ENCODE measurements at regions of chr17 and their contacts with region 1.

Region 1: GRCh38 chr17:49031965-49032928 is 35.1 kb downstream of the IGF2BP1 start:
- DNase-seq: peak; percentile 84
- CTCF ChIP-seq: peak; percentile 71

Region 2: DNA sequence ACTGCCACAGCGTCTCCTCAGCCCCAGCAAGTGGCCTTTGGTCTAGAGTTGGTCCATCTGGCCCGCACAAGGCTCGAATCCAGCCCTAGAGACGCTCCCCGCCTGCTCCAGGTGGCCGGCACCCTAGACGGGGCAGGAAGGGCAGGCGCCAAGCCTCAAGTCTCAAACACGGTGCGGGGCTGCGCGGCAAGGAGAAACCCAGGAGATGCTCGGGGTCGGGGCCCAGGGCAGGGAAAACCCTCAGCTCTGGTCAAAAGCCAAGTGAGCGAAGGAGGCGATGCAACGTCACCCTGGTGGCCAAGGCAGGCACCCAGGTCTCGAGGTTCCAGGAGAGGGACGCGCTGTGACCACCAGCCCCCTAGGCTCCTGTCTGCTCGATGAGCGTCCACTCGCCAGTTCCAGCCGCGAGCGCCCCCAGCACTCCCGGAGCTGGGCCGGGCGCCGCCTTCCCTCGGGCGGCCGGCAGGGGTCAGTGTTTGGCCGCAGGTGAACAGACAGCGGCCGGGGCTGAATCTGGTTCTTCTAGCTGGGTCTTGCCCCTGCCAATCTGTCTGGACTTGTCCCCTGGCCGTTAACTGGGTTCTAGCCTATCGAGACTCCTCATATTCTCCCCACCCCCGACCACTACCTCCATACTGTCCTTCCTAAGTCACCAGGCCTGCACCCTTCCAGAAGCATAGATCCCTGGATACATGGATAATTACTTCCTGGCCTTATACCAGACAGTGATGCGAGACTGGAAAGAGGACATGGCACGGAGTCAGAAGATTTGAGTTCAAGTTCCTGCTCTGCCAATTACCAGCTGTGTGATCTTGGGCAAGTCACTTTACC is 353.9 kb before region 1 on chr17:
- CTCF ChIA-PET with region 1: interaction called, 19 read pairs
- POLR2A ChIA-PET with region 1: no interaction called
- DNase-seq: peak; percentile 89
- CTCF ChIP-seq: peak; percentile 92

Region 3: DNA sequence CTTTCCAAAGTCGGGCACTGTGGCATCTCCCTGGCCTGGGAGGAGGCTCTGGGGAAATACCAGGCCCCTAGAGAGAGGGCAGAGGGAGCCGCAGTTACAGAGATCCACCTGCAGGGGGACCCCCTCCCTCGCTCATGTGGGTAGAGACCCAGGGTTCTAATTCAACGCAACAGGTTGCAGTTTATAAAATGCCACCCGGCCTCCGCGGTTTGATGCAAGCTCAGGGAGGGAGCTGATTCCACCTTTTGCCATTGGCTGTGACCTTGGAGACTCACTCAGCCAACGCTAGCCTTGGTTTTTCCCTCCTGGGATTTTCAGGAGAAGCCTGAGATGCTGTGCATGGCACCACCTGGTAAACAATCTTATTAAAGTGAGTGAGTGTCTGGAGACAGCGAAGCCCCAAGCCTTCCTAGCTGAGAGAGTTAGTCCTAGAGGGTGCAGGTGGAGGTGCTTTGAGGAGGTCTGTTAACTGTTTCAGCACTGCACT is 227.3 kb before region 1 on chr17:
- CTCF ChIA-PET with region 1: interaction called, 26 read pairs
- POLR2A ChIA-PET with region 1: no interaction called
- DNase-seq: peak; percentile 83
- CTCF ChIP-seq: peak; percentile 92

Region 4: GRCh38 chr17:48830840-48831548 is 201.3 kb before region 1 on chr17 and contains the start of gene CALCOCO2:
- CTCF ChIA-PET with region 1: no interaction called
- POLR2A ChIA-PET with region 1: interaction called, 10 read pairs
- DNase-seq: peak; percentile 96
- CTCF ChIP-seq: peak; percentile 8

Region 5: DNA sequence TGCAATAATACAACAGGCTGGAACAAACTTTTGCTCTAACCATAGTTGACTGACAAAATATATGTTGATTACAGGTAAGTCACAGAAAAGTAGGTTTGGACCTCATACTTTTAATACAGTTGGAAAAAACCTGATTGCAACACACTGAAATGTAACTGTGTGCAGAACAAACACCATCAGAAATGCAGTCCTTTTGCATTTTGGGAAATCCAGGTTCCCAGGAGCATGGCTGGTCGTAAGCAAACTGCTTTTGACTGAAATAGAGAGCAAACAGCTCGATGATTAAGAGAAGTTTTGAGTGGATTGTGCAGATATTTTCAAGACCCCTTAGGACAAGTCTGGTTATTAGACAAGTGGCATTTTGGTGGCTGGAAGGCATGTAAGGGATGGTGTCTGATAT is 27.1 kb before region 1 on chr17:
- CTCF ChIA-PET with region 1: interaction called, 12 read pairs
- POLR2A ChIA-PET with region 1: no interaction called
- DNase-seq: no peak
- CTCF ChIP-seq: no peak

Region 6: DNA sequence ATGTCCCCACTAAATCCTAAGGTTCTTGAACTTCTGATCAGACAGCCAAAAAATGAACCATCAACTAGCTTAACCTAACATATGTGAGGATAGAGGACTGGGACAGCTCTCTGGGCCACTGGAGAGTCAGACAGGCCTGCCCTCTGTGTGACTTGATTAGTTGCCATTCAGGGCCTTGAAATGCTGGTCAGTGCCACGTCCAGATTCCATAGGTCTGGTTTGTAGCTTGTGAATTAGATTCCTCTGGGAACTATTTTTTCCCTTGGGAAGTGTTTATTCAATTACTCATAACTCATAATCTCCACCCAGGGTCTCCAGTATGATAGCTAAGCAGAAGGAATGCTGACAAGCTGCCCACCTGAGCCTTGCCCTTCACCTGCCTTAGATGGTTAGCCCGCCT is 13.1 kb after region 1 on chr17:
- CTCF ChIA-PET with region 1: interaction called, 56 read pairs
- POLR2A ChIA-PET with region 1: no interaction called
- DNase-seq: no peak
- CTCF ChIP-seq: no peak

Region 7: DNA sequence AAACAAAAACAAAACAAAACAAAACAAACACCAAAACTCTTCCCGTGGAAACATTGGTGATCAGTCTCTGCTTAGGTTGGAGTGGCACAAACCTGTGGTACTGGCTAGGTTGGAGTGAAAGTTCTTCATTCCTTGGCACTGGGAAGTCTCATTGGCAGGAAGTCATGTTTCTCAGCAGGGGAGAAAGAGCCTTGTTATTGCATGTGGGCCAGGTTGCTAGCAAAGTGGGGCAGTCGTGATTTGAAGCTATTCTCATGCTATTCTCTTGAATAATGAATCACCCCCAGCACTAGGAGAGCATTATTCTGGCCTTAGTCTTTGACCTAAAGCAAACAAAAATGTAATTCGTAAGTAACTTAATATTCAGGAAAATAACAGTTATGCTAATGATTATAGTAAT is 76.1 kb after region 1 on chr17:
- CTCF ChIA-PET with region 1: no interaction called
- POLR2A ChIA-PET with region 1: no interaction called
- DNase-seq: no peak
- CTCF ChIP-seq: no peak

Measured in GM10248 (cell line).